Activated T-helper 1 cell treated with anti-CD3 and anti-CD28 coated beads, Interleukin-12 subunit alpha, Interleukin-12 subunit beta, Interleukin-2, Interleukin-4 antibody, amounts not matched to agents 30 ng/mL and 10 ng/mL and 1 ng/mL, durations not matched to agents 14 hours and 24 hours and 36 hours (primary cell): ENCODE measurements at regions of chr14 and their contacts with region 1.

Region 1: DNA sequence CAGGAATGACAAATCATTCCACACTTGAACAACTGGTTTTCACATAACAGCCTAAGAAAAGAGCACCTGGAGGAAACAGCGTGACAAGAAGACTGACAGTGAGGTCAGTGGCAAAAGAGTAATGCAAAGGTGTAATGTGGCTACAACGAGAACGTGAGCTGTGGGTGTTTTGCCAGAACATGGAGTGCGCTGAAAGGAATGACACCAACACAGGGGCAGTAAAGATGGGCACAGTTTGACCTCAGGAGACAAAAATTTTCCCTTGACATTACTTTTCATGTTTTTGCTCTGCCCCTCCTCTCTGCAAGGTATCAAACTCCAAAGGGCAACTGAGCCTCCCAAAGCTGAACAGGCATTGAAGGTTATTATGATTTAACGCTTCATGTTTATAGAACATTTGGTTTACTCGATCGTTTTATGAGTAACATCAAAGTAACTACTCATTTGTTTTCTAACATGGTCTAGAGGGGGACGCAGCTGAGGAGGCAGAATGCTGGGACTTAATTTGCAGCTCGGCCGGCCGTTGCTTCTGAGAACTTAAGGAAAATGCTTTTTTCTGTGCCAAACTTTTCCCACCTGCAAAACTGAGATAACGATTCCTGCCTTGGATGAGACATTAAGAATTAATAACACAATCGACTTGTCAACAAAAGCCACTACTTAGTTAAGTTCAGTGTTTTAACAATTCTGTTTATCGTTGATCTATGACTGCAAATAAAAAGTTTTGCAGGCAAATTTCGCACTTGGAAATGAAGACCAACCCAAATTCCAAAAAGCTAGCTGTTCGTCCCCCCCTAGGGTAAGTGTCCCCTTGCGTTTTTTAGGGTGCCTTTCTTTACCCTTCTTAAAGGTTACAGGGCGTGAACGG is 954 bp downstream of the HAUS4 start:
- DNase-seq: no peak
- H3K4me3 Mint-ChIP-seq: peak overlapping the region; percentile 93
- H3K27ac Mint-ChIP-seq: peak overlapping the region; percentile 86
- H3K4me1 Mint-ChIP-seq: peaks cover 17% of the 10 kb centered on the region
- H3K27me3 Mint-ChIP-seq: peaks cover 3% of the 10 kb centered on the region

Region 2: GRCh38 chr14:23034483-23035302 is 78.8 kb after region 1 on chr14 and contains the start of gene PSMB5:
- intact Hi-C with region 1: loop called (anchors 1 kb)
- DNase-seq: peak; percentile 85
- H3K4me3 Mint-ChIP-seq: peak within 1 kb of the TSS; percentile 98
- H3K27ac Mint-ChIP-seq: peak within 1 kb of the TSS; percentile 98
- H3K4me1 Mint-ChIP-seq: peaks cover 28% of the 10 kb centered on the region
- H3K27me3 Mint-ChIP-seq: peaks cover 2% of the 10 kb centered on the region
- total RNA-seq, gene PSMB5: 144 and 148 TPM in 2 replicates